ENCODE measurements at regions of chr1 and their contacts with region 1.

Region 1: GRCh38 chr1:90114521-90115141 is 119.7 kb downstream of the ZNF326 start:
- DNase-seq: no peak
- ATAC-seq: no peak
- H3K4me3 Mint-ChIP-seq: no peak overlapping the region
- H3K27ac Mint-ChIP-seq: no peak overlapping the region
- H3K4me1 Mint-ChIP-seq: no peaks in the 10 kb centered on the region
- H3K27me3 Mint-ChIP-seq: peaks cover 29% of the 10 kb centered on the region

Region 2: GRCh38 chr1:89941110-89941770 is 173.4 kb before region 1 on chr1:
- CTCF ChIA-PET with region 1: no interaction called
- POLR2A ChIA-PET with region 1: no interaction called
- intact Hi-C with region 1: no loop called
- DNase-seq: no peak
- ATAC-seq: no peak
- H3K4me3 Mint-ChIP-seq: no peak overlapping the region
- H3K27ac Mint-ChIP-seq: no peak overlapping the region
- H3K4me1 Mint-ChIP-seq: peaks cover 12% of the 10 kb centered on the region
- H3K27me3 Mint-ChIP-seq: no peaks in the 10 kb centered on the region

Region 3: DNA sequence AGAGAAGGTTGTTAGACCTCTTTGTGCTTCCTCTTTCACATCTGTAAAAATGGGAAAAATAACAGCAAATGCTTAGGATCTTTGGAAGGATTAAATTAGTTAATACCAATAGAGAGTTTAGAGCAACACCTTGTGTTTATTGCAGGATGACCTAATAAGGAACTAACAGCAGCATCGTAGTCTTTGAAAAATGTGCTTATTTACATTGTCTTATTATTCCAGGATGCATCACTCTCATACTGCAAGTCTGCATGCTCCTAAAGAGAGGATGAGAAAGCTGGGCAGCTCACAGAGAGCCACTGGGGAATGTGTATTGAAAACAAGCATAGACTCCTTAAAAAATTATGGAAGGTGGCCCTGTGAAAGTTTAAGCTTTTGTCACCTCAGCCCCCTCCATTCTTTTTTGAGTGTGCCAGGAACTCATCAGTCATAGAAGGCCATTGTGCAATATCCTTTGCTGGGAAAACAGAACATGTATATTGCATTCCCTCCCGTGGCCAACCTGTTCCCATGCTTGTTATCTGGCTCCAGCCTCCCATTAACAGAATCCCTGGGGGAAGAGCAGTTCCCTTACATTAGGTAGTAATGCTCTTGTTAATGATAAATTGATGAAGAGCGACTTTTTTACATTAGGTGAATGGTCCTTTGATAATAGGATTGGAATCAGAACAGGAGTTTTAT is 61.0 kb after region 1 on chr1:
- CTCF ChIA-PET with region 1: no interaction called
- POLR2A ChIA-PET with region 1: no interaction called
- intact Hi-C with region 1: loop called in 1 of 2 experiments (anchors 10 kb)
- DNase-seq: no peak
- ATAC-seq: no peak
- H3K4me3 Mint-ChIP-seq: no peak overlapping the region
- H3K27ac Mint-ChIP-seq: no peak overlapping the region
- H3K4me1 Mint-ChIP-seq: no peaks in the 10 kb centered on the region
- H3K27me3 Mint-ChIP-seq: peaks cover 3% of the 10 kb centered on the region